Activated CD4-positive, alpha-beta T cell treated with anti-CD3 and anti-CD28 coated beads, Interleukin-2, amount 10 ng/mL, durations not matched to agents 7 days and 5 days (primary cell): ENCODE measurements at regions of chr19 and their contacts with region 1.

Region 1: GRCh38 chr19:39846176-39846677 is at the start of gene FBL:
- DNase-seq: peak; percentile 98
- H3K4me3 Mint-ChIP-seq: peak within 1 kb of the TSS; percentile 89
- H3K27ac Mint-ChIP-seq: peak within 1 kb of the TSS; percentile 92
- H3K4me1 Mint-ChIP-seq: peaks cover 48% of the 10 kb centered on the region
- H3K27me3 Mint-ChIP-seq: no peaks in the 10 kb centered on the region
- total RNA-seq, gene FBL: 330 to 377 TPM

Region 2: DNA sequence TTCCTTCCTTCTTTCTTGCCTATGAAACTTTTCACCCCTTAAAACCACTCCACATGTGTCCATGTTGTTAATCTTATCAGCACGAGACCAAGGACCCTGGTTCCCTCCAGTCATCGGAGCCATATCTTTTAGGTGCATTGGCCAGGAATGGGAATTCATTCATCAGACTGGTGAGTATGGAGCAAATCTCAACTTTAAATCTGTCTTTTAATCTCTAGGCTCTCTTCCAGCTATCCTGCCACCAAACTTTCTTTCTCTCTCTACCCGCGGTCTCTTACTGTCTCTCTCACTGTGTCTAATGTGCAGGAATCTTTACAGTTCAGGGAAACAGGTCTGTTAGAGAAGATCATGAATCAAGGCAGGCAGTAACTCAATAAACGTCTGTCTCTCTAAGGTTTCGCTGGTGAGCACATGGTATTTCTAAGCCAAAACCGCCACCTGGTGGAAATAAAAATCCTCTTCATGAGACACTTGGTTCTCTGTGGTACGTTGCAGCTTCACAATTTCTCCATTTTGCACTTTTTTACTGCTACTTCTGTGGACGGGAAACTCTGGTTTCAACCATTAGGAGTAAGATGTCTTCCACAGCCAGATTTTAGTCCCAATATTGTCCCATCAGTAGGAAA is 174.4 kb before region 1 on chr19:
- CTCF ChIA-PET with region 1: interaction called, 26 read pairs
- POLR2A ChIA-PET with region 1: no interaction called
- DNase-seq: peak; percentile 74
- H3K4me3 Mint-ChIP-seq: no peak overlapping the region
- H3K27ac Mint-ChIP-seq: no peak overlapping the region
- H3K4me1 Mint-ChIP-seq: peaks cover 30% of the 10 kb centered on the region
- H3K27me3 Mint-ChIP-seq: peaks cover 6% of the 10 kb centered on the region

Region 3: DNA sequence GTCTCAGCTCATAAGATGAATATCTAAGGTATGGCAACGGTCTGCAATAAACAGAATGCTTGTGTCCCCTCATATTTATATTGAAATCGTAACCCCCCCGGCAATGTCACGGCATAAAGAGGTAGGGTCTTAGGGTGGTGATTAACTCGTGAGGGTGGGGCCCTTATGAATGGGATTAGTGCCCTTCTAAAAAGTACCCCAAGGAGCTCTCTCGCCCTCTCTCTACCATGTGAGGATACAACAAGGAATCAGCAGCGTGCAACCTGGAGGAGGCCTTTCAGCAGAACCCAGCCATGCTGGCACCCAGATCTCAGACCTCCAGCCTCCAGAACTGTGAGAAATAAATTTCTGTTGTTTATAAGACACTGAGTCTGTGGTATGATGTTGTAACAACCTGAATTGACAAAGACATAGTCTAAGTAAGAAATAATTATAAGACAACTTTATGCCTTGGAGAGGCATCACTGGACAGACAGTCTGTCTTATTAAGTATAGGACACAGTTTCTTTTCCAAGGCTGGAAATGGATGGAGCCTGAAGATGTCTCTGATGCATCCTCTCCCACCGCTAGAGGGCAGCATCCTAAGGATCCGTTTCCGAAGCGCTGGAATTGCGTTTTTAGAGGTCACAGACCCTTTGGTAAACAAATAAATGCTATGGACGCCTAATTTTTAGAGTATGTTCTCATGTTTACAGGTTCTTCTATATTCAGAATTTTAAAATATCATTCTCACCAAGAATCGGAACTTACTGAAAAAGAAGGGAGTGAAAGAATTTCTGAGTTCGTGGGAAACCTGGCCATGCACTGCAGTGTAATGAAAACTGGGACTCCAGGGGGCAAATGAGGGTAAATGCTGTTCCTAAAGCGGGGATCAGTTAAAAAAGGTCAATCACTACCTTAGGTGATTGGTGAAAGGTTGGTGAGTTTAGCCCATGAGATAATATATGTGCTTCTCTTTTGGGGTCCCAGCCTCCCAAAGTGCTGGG is 80.8 kb before region 1 on chr19:
- CTCF ChIA-PET with region 1: interaction called, 12 read pairs
- POLR2A ChIA-PET with region 1: no interaction called
- DNase-seq: peak; percentile 48
- H3K4me3 Mint-ChIP-seq: no peak overlapping the region
- H3K27ac Mint-ChIP-seq: no peak overlapping the region
- H3K4me1 Mint-ChIP-seq: peaks cover 10% of the 10 kb centered on the region
- H3K27me3 Mint-ChIP-seq: peaks cover 12% of the 10 kb centered on the region

Region 4: GRCh38 chr19:39792999-39793546 is 53.2 kb before region 1 on chr19:
- CTCF ChIA-PET with region 1: interaction called, 31 read pairs
- POLR2A ChIA-PET with region 1: no interaction called
- DNase-seq: peak; percentile 78
- H3K4me3 Mint-ChIP-seq: peak overlapping the region; percentile 73
- H3K27ac Mint-ChIP-seq: no peak overlapping the region
- H3K4me1 Mint-ChIP-seq: peaks cover 14% of the 10 kb centered on the region
- H3K27me3 Mint-ChIP-seq: peaks cover 21% of the 10 kb centered on the region

Region 5: DNA sequence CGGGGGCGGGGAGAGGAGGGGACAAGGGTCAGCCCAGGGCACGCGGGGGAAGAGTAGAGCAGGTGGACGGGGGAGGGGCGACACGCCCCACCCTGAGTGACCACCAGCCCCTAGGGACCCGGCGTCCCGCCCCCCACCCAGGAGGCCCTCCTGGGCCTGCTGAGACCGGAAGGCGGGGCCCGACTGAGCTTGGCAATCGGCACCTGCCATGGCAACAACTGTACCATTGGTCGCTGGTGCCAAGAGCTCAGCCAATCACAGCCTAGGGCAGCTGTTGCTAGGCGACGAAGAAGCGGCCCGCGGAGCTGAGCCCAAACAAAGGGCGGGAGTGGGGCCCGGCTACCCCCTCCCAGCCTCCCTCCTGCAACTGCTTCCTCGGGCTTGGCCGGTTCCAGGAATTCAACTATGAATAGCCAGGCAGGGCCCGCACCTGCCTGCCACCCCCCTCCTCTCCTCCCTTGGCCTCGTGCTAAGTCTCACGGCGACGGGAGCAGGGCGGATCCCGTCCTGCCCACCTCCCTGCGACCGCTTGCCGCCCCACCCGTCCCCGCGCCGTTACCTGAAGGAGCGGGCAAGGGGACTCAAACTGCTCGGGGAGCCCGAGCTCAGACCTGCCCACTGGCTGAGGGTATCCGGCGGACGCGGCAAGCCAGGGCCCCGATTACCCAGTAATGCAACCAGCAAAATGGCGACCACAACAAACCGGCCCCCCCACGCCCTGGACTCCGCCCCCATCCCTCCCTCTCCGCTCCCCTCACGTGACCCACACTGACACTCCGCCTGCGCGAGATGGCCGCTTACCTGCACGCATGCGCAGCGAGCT is 12.6 kb before region 1 on chr19 and contains the start of gene DYRK1B:
- CTCF ChIA-PET with region 1: interaction called, 20 read pairs
- POLR2A ChIA-PET with region 1: interaction called, 3 read pairs
- DNase-seq: peak; percentile 98
- H3K4me3 Mint-ChIP-seq: peak within 1 kb of the TSS; percentile 74
- H3K27ac Mint-ChIP-seq: peak within 1 kb of the TSS; percentile 89
- H3K4me1 Mint-ChIP-seq: peaks cover 30% of the 10 kb centered on the region
- H3K27me3 Mint-ChIP-seq: no peaks in the 10 kb centered on the region
- total RNA-seq, gene DYRK1B: 10.9 to 11.5 TPM

Region 6: DNA sequence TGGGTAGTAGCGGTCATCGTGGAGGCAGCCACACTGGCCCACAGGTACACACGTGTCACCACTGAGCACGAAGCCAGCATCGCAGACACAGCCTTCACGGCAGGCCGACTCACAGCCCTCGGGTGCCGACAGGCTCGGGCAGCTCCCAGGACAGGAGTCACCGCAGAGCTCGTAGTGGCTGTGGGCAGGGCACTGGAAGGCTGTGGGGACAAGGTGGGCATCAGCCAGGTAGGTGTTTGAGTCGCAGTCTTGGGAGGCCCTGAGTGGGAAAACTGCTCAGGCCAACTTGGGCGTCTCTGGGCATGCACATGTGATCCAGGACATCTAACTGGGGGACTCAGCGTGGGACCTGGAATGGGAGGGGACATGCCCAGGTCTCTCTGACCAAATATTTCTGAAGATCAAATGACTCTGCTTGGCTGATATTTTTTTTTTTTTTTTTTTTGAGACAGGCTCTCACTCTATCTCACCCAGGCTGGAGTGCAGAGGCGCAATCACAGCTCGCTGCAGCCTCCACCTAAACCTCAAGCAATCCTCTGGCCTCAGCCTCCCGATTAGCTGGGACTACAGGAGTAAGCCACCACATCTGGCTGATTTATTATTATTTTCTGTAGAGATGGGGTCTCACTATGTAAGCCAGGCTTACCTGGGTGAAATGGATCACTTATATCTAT is 43.8 kb after region 1 on chr19:
- CTCF ChIA-PET with region 1: no interaction called
- POLR2A ChIA-PET with region 1: no interaction called
- DNase-seq: no peak
- H3K4me3 Mint-ChIP-seq: no peak overlapping the region
- H3K27ac Mint-ChIP-seq: no peak overlapping the region
- H3K4me1 Mint-ChIP-seq: peaks cover 3% of the 10 kb centered on the region
- H3K27me3 Mint-ChIP-seq: no peaks in the 10 kb centered on the region

Region 7: DNA sequence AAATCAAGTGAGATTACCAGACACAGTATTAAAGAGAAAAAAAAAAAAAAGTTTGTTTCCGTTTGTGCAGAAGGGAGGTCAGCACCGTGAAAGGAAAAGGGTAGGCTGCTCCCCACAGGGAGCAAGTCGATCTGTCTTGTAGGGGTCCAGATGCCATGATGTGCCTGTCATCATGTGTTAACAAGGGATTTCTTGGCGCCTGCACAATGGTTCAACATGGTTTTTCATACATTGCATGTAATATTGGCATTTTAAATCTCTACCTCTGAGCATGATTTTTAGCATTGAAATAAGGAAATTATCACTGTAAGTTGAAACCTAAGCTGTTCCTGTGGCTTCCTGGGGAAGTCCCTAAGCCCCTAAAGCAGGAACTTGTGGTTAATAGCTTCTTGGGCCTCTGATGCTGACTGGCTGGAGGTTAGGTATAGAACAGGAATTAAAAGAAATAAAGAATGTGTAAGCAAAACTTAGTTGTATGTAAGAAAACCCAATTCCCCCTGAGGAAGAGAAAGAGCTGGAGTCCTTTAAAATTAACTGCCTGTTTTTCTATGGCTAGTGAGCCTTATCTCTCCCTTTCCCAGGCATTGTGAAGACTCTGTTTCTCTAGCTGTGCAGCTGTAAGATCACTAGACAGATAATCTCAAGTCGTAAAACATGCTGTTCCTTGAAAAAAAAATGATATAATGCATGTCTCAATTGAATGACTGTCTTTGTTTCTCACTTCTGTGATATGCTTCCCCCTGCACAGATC is 95.6 kb after region 1 on chr19:
- CTCF ChIA-PET with region 1: no interaction called
- POLR2A ChIA-PET with region 1: no interaction called
- DNase-seq: peak; percentile 66
- H3K4me3 Mint-ChIP-seq: peak overlapping the region; percentile 50
- H3K27ac Mint-ChIP-seq: peak overlapping the region; percentile 88
- H3K4me1 Mint-ChIP-seq: peaks cover 77% of the 10 kb centered on the region
- H3K27me3 Mint-ChIP-seq: no peaks in the 10 kb centered on the region